ENCODE measurements at regions of chr13 and their contacts with region 1.

Region 1: DNA sequence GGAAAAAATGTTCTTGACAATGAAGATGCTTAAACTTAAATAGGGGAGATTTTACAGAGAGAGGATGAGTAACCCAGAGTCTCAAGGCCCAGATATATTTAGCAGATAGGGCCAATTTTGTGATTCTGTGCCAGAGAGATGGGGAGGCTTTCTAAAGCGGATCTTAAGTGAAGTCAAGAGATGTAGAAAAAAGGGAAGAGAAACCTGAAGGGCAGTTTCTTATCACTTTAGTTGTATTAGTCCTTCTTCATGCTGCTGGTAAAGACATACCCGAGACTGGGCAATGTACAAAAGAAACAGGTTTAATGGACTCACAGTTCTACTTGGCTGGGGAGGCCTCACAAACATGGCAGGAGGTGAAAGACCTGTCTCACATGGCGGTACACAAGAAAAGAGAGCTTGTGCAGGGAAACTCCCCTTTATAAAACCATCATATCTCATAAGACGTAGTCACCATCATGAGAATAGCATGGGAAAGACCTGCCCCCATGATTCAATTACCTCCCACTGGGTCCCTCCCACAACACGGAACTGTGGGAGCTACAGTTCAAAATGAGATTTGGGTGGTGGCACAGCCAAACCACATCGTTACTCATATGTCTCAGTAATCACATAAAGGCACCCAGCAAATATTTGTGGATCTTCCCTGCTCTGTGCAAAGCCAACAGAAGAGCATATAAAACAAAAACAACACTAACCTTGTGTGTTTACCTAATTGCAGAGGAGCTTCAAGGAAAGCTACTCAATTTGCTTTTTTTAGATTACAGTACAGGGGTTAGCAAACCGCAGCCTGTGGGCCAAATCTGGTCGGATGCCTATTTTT is 102.6 kb upstream of the MYCBP2 start:
- DNase-seq: no peak
- H3K4me3 Mint-ChIP-seq: no peak overlapping the region
- H3K27ac Mint-ChIP-seq: peak overlapping the region; percentile 38
- H3K4me1 Mint-ChIP-seq: peaks cover 1% of the 10 kb centered on the region
- H3K27me3 Mint-ChIP-seq: peaks cover 2% of the 10 kb centered on the region

Region 2: GRCh38 chr13:77300176-77301037 is 129.1 kb before region 1 on chr13:
- intact Hi-C with region 1: no loop called
- DNase-seq: peak; percentile 43
- H3K4me3 Mint-ChIP-seq: no peak overlapping the region
- H3K27ac Mint-ChIP-seq: no peak overlapping the region
- H3K4me1 Mint-ChIP-seq: peaks cover 30% of the 10 kb centered on the region
- H3K27me3 Mint-ChIP-seq: no peaks in the 10 kb centered on the region

Region 3: GRCh38 chr13:77345150-77345780 is 84.3 kb before region 1 on chr13:
- intact Hi-C with region 1: loop called (anchors 1 kb)
- DNase-seq: peak; percentile 57
- H3K4me3 Mint-ChIP-seq: peak overlapping the region; percentile 36
- H3K27ac Mint-ChIP-seq: peak overlapping the region; percentile 89
- H3K4me1 Mint-ChIP-seq: peaks cover 8% of the 10 kb centered on the region
- H3K27me3 Mint-ChIP-seq: no peaks in the 10 kb centered on the region

Region 4: GRCh38 chr13:77386880-77387606 is 42.5 kb before region 1 on chr13:
- intact Hi-C with region 1: loop called (anchors 5 kb)
- DNase-seq: no peak
- H3K4me3 Mint-ChIP-seq: no peak overlapping the region
- H3K27ac Mint-ChIP-seq: no peak overlapping the region
- H3K4me1 Mint-ChIP-seq: peaks cover 5% of the 10 kb centered on the region
- H3K27me3 Mint-ChIP-seq: peaks cover 43% of the 10 kb centered on the region

Region 5: DNA sequence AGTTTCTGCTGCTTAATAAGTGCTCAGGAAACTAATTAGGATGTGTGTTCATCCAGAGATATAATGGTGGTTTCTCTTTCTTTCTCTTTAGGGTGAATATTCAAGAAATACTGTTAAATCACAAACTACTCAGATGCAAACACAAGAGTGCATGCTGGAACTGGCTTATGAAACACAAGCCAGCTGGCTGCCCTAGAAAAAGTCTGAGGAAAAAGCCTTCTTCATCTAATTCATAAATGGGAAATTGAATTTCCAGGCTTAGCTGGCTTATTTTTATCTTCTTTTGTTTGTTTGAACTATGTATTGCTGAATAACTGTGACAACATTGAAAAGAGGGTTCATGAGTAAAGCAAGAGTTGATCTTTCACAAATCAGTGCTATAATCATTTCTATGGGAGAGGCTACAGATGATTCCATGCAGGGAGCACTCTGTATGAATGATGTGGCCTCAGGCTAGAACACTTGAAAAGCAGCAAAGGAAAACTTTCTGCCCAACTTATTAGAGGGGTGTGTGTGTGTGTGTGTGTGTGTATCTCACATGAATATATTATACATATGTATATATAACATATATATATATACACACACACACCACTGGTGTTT is 36.2 kb after region 1 on chr13:
- intact Hi-C with region 1: no loop called
- DNase-seq: no peak
- H3K4me3 Mint-ChIP-seq: no peak overlapping the region
- H3K27ac Mint-ChIP-seq: no peak overlapping the region
- H3K4me1 Mint-ChIP-seq: no peaks in the 10 kb centered on the region
- H3K27me3 Mint-ChIP-seq: peaks cover 18% of the 10 kb centered on the region